ENCODE measurements at regions of chr1 and their contacts with region 1.

Region 1: DNA sequence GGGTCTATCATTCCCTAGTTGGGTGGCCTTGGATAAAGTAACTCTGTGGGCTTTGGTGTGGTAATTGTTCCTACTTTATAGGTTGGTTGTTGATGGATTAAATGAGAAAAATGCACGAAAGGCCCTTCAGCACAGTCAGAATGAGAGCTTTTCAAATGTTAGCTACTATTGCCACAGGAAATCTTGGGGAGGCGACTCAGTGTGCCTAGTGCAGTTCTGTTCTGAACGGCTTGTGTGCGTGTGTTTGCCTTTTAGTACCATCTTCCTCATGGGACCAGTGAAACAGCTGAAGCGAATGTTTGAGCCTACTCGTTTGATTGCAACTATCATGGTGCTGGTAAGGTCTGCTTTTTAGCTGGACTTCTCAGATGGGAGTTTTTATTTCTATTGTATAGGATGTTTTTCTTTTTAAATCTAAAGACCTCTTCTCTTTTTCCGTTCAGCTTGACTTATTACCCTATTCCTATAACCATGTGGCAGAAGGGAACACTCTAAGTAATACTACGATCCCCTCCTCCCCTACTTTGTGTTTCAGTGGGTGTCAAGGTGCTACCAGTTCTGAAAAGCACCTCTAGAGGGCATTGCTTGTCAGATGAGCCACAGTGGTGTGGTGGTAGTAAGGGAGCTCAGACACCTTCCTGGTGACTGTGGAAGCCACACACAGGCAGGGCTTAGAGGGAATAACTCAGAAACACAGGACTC is 9.2 kb downstream of the SFT2D2 start:
- DNase-seq: peak in 4 of 5 donors; percentile 22 to 57 (median 30)
- H3K4me3 ChIP-seq: no peak overlapping the region
- H3K4me3 Mint-ChIP-seq: no peak overlapping the region
- H3K27ac ChIP-seq: no peak overlapping the region
- H3K27ac Mint-ChIP-seq: peak overlapping the region in 6 of 8 donors; percentile 13 to 89 (median 52)
- H3K4me1 ChIP-seq: peaks cover 15% of the 10 kb centered on the region
- H3K4me1 Mint-ChIP-seq: peaks cover 42 to 70% (median 64%) of the 10 kb centered on the region in 3 donors
- H3K27me3 ChIP-seq: no peaks in the 10 kb centered on the region
- H3K27me3 Mint-ChIP-seq: no peaks in the 10 kb centered on the region

Region 2: DNA sequence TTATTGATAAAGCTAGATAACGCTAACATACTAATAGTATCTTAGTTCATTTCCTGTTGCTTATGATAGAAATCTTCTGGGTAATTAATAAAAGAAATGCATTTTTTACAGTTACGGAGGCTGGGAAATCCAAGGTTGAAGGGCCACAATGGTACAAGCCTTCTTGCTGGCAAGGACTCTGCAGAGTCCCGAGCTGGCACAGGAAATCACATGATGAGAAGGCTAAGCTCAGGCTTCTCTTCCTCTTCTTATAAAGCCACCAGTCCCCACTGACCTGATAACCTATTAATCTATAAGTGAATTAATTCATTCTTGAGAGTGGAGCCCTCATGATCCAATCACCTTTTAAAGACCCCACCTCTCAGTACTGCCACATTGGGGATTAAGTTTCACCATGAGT is 180.9 kb before region 1 on chr1:
- CTCF ChIA-PET with region 1: no interaction called
- POLR2A ChIA-PET with region 1: no interaction called
- DNase-seq: no peak
- H3K4me3 ChIP-seq: no peak overlapping the region
- H3K4me3 Mint-ChIP-seq: peak overlapping the region in 1 of 7 donors; percentile 29
- H3K27ac ChIP-seq: no peak overlapping the region
- H3K27ac Mint-ChIP-seq: peak overlapping the region in 2 of 8 donors; percentile 5 to 43
- H3K4me1 ChIP-seq: no peaks in the 10 kb centered on the region
- H3K4me1 Mint-ChIP-seq: peaks cover 11 to 19% (median 17%) of the 10 kb centered on the region in 3 donors
- H3K27me3 ChIP-seq: no peaks in the 10 kb centered on the region
- H3K27me3 Mint-ChIP-seq: no peaks in the 10 kb centered on the region

Region 3: DNA sequence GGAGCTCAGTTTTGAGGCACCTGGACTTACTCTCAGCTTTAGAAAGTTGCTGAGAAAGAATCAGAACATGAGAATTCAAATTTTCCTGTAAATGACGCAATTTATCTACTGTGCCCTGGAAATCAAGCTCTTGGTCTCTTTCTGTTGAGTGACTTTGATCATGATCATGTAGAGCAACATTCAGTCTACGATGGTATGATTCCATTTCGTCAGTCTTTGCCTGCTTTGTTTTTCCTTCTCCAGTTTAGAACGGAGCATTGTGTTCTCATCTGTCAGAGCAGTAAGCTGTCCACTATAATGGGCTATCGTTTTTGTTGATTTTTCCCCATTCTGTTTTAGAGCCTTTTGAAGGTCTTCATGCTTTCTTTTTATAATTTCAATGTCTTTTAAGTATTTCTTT is 11.5 kb after region 1 on chr1:
- CTCF ChIA-PET with region 1: interaction called, 13 read pairs
- POLR2A ChIA-PET with region 1: no interaction called
- DNase-seq: no peak
- H3K4me3 ChIP-seq: no peak overlapping the region
- H3K4me3 Mint-ChIP-seq: no peak overlapping the region
- H3K27ac ChIP-seq: no peak overlapping the region
- H3K27ac Mint-ChIP-seq: peak overlapping the region in 1 of 8 donors; percentile 7
- H3K4me1 ChIP-seq: peaks cover 9% of the 10 kb centered on the region
- H3K4me1 Mint-ChIP-seq: peaks cover 64 to 82% (median 70%) of the 10 kb centered on the region in 3 donors
- H3K27me3 ChIP-seq: no peaks in the 10 kb centered on the region
- H3K27me3 Mint-ChIP-seq: no peaks in the 10 kb centered on the region

Region 4: GRCh38 chr1:168266644-168267186 is 31.7 kb after region 1 on chr1:
- CTCF ChIA-PET with region 1: no interaction called
- POLR2A ChIA-PET with region 1: no interaction called
- DNase-seq: no peak
- H3K4me3 ChIP-seq: no peak overlapping the region
- H3K4me3 Mint-ChIP-seq: no peak overlapping the region
- H3K27ac ChIP-seq: no peak overlapping the region
- H3K27ac Mint-ChIP-seq: no peak overlapping the region
- H3K4me1 ChIP-seq: no peaks in the 10 kb centered on the region
- H3K4me1 Mint-ChIP-seq: peaks cover under 1 to 7% (median 2%) of the 10 kb centered on the region in 3 donors
- H3K27me3 ChIP-seq: no peaks in the 10 kb centered on the region
- H3K27me3 Mint-ChIP-seq: no peaks in the 10 kb centered on the region

Region 5: GRCh38 chr1:169348383-169349036 is 1113.5 kb after region 1 on chr1:
- CTCF ChIA-PET with region 1: interaction called, 10 read pairs
- POLR2A ChIA-PET with region 1: no interaction called
- DNase-seq: peak in 4 of 5 donors; percentile 6 to 50 (median 42)
- H3K4me3 ChIP-seq: no peak overlapping the region
- H3K4me3 Mint-ChIP-seq: no peak overlapping the region
- H3K27ac ChIP-seq: no peak overlapping the region
- H3K27ac Mint-ChIP-seq: no peak overlapping the region
- H3K4me1 ChIP-seq: no peaks in the 10 kb centered on the region
- H3K4me1 Mint-ChIP-seq: peaks cover 1 to 18% (median 8%) of the 10 kb centered on the region in 3 donors
- H3K27me3 ChIP-seq: no peaks in the 10 kb centered on the region
- H3K27me3 Mint-ChIP-seq: no peaks in the 10 kb centered on the region